ENCODE measurements at regions of chr19 and their contacts with region 1.

Region 1: GRCh38 chr19:11203194-11204075 is 6.1 kb upstream of the KANK2 start:
- DNase-seq: peak; percentile 83 to 89
- H3K4me3 ChIP-seq: no peak overlapping the region
- H3K27ac ChIP-seq: peak overlapping the region; percentile 92 to 95 (median 93)
- H3K4me1 ChIP-seq: peaks cover 26 to 36% of the 10 kb centered on the region in 2 donors
- H3K27me3 ChIP-seq: no peaks in the 10 kb centered on the region
- CTCF ChIP-seq: peak; percentile 74 to 92 (median 82)
- POLR2A ChIP-seq: no peak

Region 2: GRCh38 chr19:11137542-11138384 is 65.7 kb before region 1 on chr19:
- intact Hi-C with region 1: loop called (anchors 5 kb)
- DNase-seq: peak; percentile 83 to 85
- H3K4me3 ChIP-seq: no peak overlapping the region
- H3K27ac ChIP-seq: peak overlapping the region; percentile 22 to 86 (median 77)
- H3K4me1 ChIP-seq: peaks cover 40 to 47% of the 10 kb centered on the region in 2 donors
- H3K27me3 ChIP-seq: no peaks in the 10 kb centered on the region
- CTCF ChIP-seq: peak; percentile 50 to 95 (median 88)
- POLR2A ChIP-seq: no peak

Region 3: DNA sequence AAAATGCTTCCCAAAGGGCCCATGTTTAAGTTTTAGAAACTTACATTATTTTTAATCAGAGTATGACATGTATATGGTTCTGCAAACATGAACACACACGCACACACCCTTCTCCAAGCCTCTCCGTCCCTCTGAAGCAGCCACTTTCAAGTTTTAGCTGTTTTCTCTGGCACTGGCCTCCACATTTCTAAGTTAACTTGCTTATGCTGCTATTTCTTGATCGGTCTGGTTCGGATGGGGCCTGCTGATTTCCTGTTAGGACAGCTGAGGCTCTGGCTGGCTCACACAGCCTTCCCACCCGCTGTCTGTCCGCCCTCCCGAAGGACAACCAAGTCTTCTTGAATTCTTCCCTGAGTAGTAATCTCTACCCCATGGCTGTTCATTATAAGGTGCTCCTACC is 52.3 kb before region 1 on chr19:
- intact Hi-C with region 1: no loop called
- DNase-seq: no peak
- H3K4me3 ChIP-seq: no peak overlapping the region
- H3K27ac ChIP-seq: peak overlapping the region in 1 of 3 donors; percentile 55
- H3K4me1 ChIP-seq: peaks cover 7 to 11% of the 10 kb centered on the region in 2 donors
- H3K27me3 ChIP-seq: no peaks in the 10 kb centered on the region
- CTCF ChIP-seq: no peak
- POLR2A ChIP-seq: no peak